ENCODE measurements at regions of chr1 and their contacts with region 1.

Region 1: GRCh38 chr1:35016406-35016805 is 15.3 kb downstream of the ZMYM6 start:
- DNase-seq: no peak
- H3K4me3 ChIP-seq: no peak overlapping the region
- H3K27ac ChIP-seq: no peak overlapping the region
- H3K4me1 ChIP-seq: no peaks in the 10 kb centered on the region
- H3K27me3 ChIP-seq: no peaks in the 10 kb centered on the region
- CTCF ChIP-seq: no peak
- POLR2A ChIP-seq: no peak

Region 2: GRCh38 chr1:34844252-34844634 is 172.2 kb before region 1 on chr1:
- intact Hi-C with region 1: no loop called
- DNase-seq: no peak
- H3K4me3 ChIP-seq: no peak overlapping the region
- H3K27ac ChIP-seq: peak overlapping the region in 4 of 8 donors; percentile 53 to 62 (median 58)
- H3K4me1 ChIP-seq: peaks cover 0 to 37% (median 19%) of the 10 kb centered on the region in 6 donors
- H3K27me3 ChIP-seq: no peaks in the 10 kb centered on the region
- CTCF ChIP-seq: no peak
- POLR2A ChIP-seq: no peak

Region 3: DNA sequence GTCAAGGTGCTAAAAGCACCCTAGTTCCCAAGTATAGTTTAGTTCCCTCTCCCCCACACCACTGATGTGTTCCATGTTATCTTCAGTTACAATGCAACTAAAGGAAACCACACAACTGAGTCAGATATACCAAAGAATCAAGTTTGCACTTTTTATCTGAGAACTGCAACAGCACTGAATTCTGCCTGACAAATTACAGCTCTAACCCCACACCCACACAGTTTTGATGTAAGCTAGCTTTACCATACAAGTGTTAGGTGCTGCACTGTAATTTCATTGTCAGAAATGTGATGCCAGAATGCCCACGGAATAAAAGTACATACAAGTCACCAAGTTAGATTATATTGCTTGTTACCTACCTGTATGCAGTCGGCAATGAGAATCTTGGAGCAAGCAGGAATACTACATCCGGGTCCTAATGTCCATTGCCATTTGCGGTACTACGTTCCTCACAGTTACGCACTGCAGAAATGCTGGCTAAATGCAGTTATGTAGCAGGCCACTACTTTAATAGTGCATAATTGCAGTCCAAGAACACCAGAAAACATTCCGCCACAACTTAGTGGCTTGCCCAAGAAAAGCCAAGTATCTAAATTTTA is 164.5 kb after region 1 on chr1:
- intact Hi-C with region 1: loop called (anchors 10 kb)
- DNase-seq: no peak
- H3K4me3 ChIP-seq: no peak overlapping the region
- H3K27ac ChIP-seq: no peak overlapping the region
- H3K4me1 ChIP-seq: peaks cover 9 to 80% (median 69%) of the 10 kb centered on the region in 6 donors
- H3K27me3 ChIP-seq: no peaks in the 10 kb centered on the region
- CTCF ChIP-seq: no peak
- POLR2A ChIP-seq: no peak